ENCODE measurements at regions of chr11 and their contacts with region 1.

Region 1: GRCh38 chr11:67507864-67508485 is at the start of gene CDK2AP2:
- DNase-seq: peak in 9 of 10 donors; percentile 92 to 99 (median 96)
- ATAC-seq: peak; percentile 74
- H3K4me3 Mint-ChIP-seq: peak within 1 kb of the TSS; percentile 81 to 94 (median 92)
- H3K27ac Mint-ChIP-seq: peak within 1 kb of the TSS; percentile 83 to 99 (median 97)
- H3K4me1 Mint-ChIP-seq: peaks cover 26 to 47% (median 39%) of the 10 kb centered on the region in 4 donors
- H3K27me3 Mint-ChIP-seq: peaks cover 0 to 5% (median under 1%) of the 10 kb centered on the region in 5 donors
- polyA plus RNA-seq, gene CDK2AP2: 75.9 to 96.8 (median 79.5) TPM

Region 2: GRCh38 chr11:67492801-67493547 is 15.0 kb before region 1 on chr11:
- POLR2A ChIA-PET with region 1: interaction called, 118 read pairs
- DNase-seq: no peak
- ATAC-seq: peak in 1 of 2 donors; percentile 36
- H3K4me3 Mint-ChIP-seq: no peak overlapping the region
- H3K27ac Mint-ChIP-seq: no peak overlapping the region
- H3K4me1 Mint-ChIP-seq: peaks cover 10 to 21% (median 13%) of the 10 kb centered on the region in 4 donors
- H3K27me3 Mint-ChIP-seq: no peaks in the 10 kb centered on the region

Measured in naive thymus-derived CD8-positive, alpha-beta T cell (primary cell).